Activated B cell treated with CpG ODN at 0.5 μM for 24 hours (primary cell): ENCODE measurements at regions of chr19 and their contacts with region 1.

Region 1: DNA sequence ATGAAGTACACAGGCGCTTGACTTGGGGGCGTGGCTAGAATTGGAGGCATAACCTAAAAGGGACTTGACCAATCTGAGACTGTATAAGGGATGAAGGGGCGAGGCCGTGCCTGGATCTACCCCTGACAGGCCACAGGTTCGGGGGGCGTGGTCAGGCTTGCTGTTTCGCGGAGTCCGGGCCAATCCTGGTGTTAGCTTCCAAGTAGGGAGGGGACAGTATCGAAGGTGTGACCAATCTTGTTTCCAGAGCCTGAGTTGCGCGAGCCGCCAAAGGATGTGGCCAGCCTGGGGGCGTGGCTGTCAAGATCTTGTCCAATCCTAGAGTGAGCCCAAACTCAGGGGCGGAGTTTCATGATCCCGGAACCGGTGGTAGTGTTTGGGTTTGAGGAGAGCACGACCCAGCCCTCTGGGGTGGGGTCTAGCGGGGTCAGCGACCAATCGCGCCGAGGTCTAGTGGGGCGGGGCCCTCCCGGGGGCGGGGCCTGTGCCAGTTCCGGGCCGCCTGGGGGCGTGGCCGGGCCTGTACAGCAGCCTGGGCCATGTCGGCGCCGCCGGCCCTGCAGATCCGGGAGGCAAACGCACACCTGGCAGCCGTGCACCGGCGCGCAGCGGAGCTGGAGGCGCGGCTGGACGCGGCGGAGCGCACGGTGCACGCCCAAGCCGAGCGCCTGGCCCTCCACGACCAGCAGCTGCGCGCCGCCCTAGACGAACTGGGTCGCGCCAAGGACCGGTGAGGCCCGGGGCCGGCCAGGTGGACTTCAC is at the start of gene VMAC:
- DNase-seq: peak; percentile 100
- ATAC-seq: peak; percentile 78
- H3K4me3 Mint-ChIP-seq: peak within 1 kb of the TSS; percentile 95
- H3K27ac Mint-ChIP-seq: peak within 1 kb of the TSS; percentile 98
- H3K4me1 Mint-ChIP-seq: peaks cover 38% of the 10 kb centered on the region
- H3K27me3 Mint-ChIP-seq: no peaks in the 10 kb centered on the region
- CTCF ChIP-seq: no peak
- total RNA-seq, gene VMAC: 11.2 and 13.3 TPM in 2 replicates

Region 2: GRCh38 chr19:5690125-5690954 is 214.2 kb before region 1 on chr19 and contains the start of gene RPL36:
- CTCF ChIA-PET with region 1: no interaction called
- POLR2A ChIA-PET with region 1: interaction called, 8 read pairs
- intact Hi-C with region 1: loop called (anchors 1 kb)
- DNase-seq: peak; percentile 99
- ATAC-seq: peak; percentile 48
- H3K4me3 Mint-ChIP-seq: peak within 1 kb of the TSS; percentile 93
- H3K27ac Mint-ChIP-seq: peak within 1 kb of the TSS; percentile 90
- H3K4me1 Mint-ChIP-seq: peaks cover 33% of the 10 kb centered on the region
- H3K27me3 Mint-ChIP-seq: no peaks in the 10 kb centered on the region
- CTCF ChIP-seq: peak; percentile 88
- total RNA-seq, gene RPL36: 1,170 and 1,330 TPM in 2 replicates

Region 3: GRCh38 chr19:5827891-5828660 is 76.5 kb before region 1 on chr19:
- CTCF ChIA-PET with region 1: no interaction called
- POLR2A ChIA-PET with region 1: interaction called, 34 read pairs
- intact Hi-C with region 1: loop called (anchors 1 kb)
- DNase-seq: peak; percentile 78
- ATAC-seq: peak; percentile 78
- H3K4me3 Mint-ChIP-seq: peak overlapping the region; percentile 85
- H3K27ac Mint-ChIP-seq: peak overlapping the region; percentile 75
- H3K4me1 Mint-ChIP-seq: peaks cover 18% of the 10 kb centered on the region
- H3K27me3 Mint-ChIP-seq: peaks cover 11% of the 10 kb centered on the region
- CTCF ChIP-seq: no peak

Region 4: GRCh38 chr19:5977785-5978605 is 73.5 kb after region 1 on chr19 and contains the start of gene RANBP3:
- CTCF ChIA-PET with region 1: no interaction called
- POLR2A ChIA-PET with region 1: interaction called, 6 read pairs
- intact Hi-C with region 1: loop called (anchors 1 kb)
- DNase-seq: peak; percentile 97
- ATAC-seq: peak; percentile 91
- H3K4me3 Mint-ChIP-seq: peak within 1 kb of the TSS; percentile 91
- H3K27ac Mint-ChIP-seq: peak within 1 kb of the TSS; percentile 83
- H3K4me1 Mint-ChIP-seq: peaks cover 52% of the 10 kb centered on the region
- H3K27me3 Mint-ChIP-seq: no peaks in the 10 kb centered on the region
- CTCF ChIP-seq: no peak
- total RNA-seq, gene RANBP3: 77.0 and 98.5 TPM in 2 replicates

Region 5: GRCh38 chr19:6141217-6141616 is 236.7 kb after region 1 on chr19:
- CTCF ChIA-PET with region 1: no interaction called
- POLR2A ChIA-PET with region 1: no interaction called
- intact Hi-C with region 1: no loop called
- DNase-seq: no peak
- ATAC-seq: no peak
- H3K4me3 Mint-ChIP-seq: no peak overlapping the region
- H3K27ac Mint-ChIP-seq: no peak overlapping the region
- H3K4me1 Mint-ChIP-seq: peaks cover 5% of the 10 kb centered on the region
- H3K27me3 Mint-ChIP-seq: peaks cover 14% of the 10 kb centered on the region
- CTCF ChIP-seq: no peak